Heart right ventricle (tissue), 16 donors: ENCODE measurements at regions of chr6 and their contacts with region 1.

Region 1: DNA sequence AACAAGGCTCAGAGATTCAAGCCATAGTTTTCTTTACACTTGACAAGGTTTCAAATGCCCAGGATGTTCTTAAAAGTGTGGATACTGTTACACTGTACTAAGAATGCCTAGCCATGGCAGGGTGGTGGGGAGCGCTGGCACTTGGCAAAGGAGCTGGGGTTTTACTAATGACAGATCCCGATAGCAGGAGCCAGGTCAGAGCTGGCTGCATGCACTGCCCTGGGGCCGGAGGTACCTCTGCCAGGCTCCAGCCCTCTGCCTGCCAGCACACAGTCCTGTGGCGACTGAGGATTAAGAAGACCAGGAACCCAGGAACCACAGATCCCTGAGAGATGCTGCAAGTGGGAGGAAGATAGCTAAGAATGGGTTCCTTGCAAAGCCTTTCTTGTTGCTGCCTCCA is 260.3 kb downstream of the ALDH8A1 start:
- DNase-seq: peak; percentile 45 to 50
- ATAC-seq: peak; percentile 82 to 96 (median 93)
- H3K4me3 ChIP-seq: peak overlapping the region in 5 of 10 donors; percentile 35 to 48 (median 41)
- H3K27ac ChIP-seq: peak overlapping the region in 8 of 10 donors; percentile 32 to 83 (median 70)
- H3K4me1 ChIP-seq: peaks cover 0 to 25% (median 5%) of the 10 kb centered on the region in 9 donors
- H3K27me3 ChIP-seq: no peaks in the 10 kb centered on the region
- CTCF ChIP-seq: no peak

Region 2: DNA sequence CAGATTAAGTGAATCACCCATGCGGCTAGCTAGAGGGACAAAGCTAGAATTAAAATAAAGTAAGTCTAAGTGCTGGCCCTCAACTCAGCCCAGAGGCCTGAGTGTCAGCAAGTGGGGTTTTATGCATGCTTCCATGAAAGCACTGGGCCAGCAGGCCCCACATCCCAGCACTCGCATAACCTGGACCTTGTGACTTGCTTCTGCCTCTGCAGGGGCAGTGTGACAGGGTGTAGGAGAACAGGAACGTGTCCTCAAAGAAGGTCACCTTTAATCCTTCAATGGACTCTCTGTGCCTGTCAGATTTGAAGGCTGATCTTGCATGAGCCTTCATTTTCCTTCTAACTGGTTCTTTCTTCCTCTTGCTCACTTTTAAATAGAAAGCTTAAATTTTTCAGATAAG is 76.9 kb after region 1 on chr6:
- intact Hi-C with region 1: no loop called
- DNase-seq: no peak
- ATAC-seq: peak in 4 of 8 donors; percentile 52 to 71 (median 56)
- H3K4me3 ChIP-seq: no peak overlapping the region
- H3K27ac ChIP-seq: no peak overlapping the region
- H3K4me1 ChIP-seq: peaks cover 0 to 7% (median 0%) of the 10 kb centered on the region in 9 donors
- H3K27me3 ChIP-seq: no peaks in the 10 kb centered on the region
- CTCF ChIP-seq: no peak

Region 3: DNA sequence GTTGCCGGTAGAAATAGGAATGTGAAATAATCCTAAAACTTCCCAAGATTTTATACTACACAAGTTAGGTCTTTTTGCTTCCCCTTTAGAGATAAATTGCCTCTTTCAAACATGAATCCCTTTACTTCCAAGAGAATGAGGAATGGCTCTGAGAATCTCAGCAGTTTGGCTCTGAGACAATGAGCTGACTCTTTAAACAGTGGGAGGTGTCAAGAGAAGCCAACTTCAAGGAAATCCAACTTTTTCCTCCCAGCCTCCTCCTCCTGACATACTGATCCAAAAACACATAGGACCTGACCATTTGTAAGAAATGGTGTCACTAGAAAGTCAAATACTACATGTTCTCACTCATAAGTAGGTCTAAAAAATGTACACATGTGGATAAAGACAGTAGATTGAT is 106.0 kb after region 1 on chr6:
- intact Hi-C with region 1: loop called in 1 of 10 experiments (anchors 5 kb)
- DNase-seq: peak in 1 of 2 donors; percentile 6
- ATAC-seq: no peak
- H3K4me3 ChIP-seq: no peak overlapping the region
- H3K27ac ChIP-seq: peak overlapping the region in 1 of 10 donors; percentile 43
- H3K4me1 ChIP-seq: peaks cover 0 to 21% (median 0%) of the 10 kb centered on the region in 9 donors
- H3K27me3 ChIP-seq: no peaks in the 10 kb centered on the region
- CTCF ChIP-seq: no peak

Region 4: DNA sequence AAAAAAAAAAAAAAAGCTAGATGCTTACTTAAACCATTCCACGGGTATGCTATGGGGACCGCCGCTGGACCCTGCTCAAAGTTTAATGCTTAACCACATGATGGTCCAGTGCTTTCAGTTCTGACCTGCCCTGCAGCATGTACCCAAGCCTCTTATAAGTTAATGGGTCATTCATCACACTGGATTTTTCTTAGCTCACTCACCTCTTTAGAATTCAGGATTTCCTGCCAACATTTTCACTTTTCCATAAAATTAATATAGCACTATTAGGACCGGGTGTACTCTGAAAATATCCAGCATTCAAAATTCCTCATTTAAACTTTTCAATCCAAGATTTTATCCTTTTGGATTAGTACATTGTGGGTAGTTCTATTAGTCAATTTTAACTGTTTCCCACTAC is 119.5 kb after region 1 on chr6:
- intact Hi-C with region 1: no loop called
- DNase-seq: no peak
- ATAC-seq: no peak
- H3K4me3 ChIP-seq: no peak overlapping the region
- H3K27ac ChIP-seq: no peak overlapping the region
- H3K4me1 ChIP-seq: no peaks in the 10 kb centered on the region
- H3K27me3 ChIP-seq: no peaks in the 10 kb centered on the region
- CTCF ChIP-seq: no peak